IMR-90 (cell line): ENCODE measurements at regions of chr4 and their contacts with region 1.

Region 1: GRCh38 chr4:129641179-129641578 is 545.2 kb downstream of the C4orf33 start:
- DNase-seq: peak; percentile 22
- ATAC-seq: no peak
- H3K4me3 ChIP-seq: no peak overlapping the region
- H3K27ac ChIP-seq: no peak overlapping the region
- H3K4me1 ChIP-seq: no peaks in the 10 kb centered on the region
- H3K27me3 ChIP-seq: no peaks in the 10 kb centered on the region
- CTCF ChIP-seq: peak; percentile 62
- POLR2A ChIP-seq: no peak
- RAD21 ChIP-seq: peak; percentile 42

Region 2: DNA sequence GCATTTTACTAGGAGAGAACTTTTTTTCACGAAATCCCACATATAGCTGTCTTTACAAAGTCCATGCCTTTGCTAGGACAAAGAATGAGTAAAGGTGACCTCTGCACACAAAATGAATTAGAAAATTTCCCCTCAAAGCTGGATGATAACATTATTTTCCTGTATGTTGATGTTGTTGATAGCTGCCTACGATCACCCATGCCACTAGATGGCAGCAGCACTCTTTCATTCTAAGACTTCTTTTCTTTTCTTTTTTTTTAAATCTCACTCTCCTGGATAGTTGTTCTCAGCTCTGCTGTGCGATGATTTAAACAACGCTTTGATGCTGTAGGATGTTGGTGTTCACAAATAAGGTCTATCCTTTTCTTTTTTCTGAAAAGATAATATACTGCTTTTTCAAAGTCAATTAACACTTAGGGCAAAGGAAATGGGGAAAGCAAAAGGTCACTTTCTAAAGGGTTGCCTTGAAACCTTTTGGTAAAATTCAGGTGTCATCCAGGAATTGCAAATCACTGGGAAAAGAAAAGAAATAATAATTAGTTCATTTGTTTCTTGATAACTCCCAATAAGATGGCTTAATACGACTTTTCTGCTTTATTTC is 278.4 kb before region 1 on chr4:
- CTCF ChIA-PET with region 1: interaction called, 7 read pairs
- POLR2A ChIA-PET with region 1: no interaction called
- dilution Hi-C with region 1: no loop called
- in situ Hi-C with region 1: no loop called
- intact Hi-C with region 1: loop called (anchors 1 kb)
- DNase-seq: peak; percentile 60
- ATAC-seq: peak; percentile 67
- H3K4me3 ChIP-seq: no peak overlapping the region
- H3K27ac ChIP-seq: no peak overlapping the region
- H3K4me1 ChIP-seq: no peaks in the 10 kb centered on the region
- H3K27me3 ChIP-seq: peaks cover 8% of the 10 kb centered on the region
- CTCF ChIP-seq: peak; percentile 78
- POLR2A ChIP-seq: no peak
- RAD21 ChIP-seq: peak; percentile 74

Region 3: DNA sequence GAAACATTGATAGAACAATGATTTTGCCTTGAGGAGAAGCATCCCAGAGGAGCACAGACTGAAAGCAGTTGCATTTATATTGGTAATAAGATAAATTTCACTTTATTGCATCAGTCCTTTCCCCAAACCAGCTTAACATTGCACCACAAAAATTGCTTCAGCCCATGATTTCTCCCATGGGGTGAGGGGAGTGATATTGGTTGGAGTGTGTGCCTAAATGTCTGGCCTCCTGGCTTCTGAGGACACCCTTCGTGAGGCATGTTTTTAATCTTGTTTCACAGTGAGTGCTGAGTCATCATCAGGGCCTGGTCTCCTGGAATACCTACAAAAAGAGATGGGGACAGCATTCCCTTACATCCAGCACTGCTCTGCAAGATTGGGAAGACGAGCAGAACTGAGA is 57.3 kb before region 1 on chr4:
- CTCF ChIA-PET with region 1: no interaction called
- POLR2A ChIA-PET with region 1: no interaction called
- dilution Hi-C with region 1: no loop called
- in situ Hi-C with region 1: no loop called
- intact Hi-C with region 1: no loop called
- DNase-seq: no peak
- ATAC-seq: no peak
- H3K4me3 ChIP-seq: no peak overlapping the region
- H3K27ac ChIP-seq: no peak overlapping the region
- H3K4me1 ChIP-seq: no peaks in the 10 kb centered on the region
- H3K27me3 ChIP-seq: no peaks in the 10 kb centered on the region
- CTCF ChIP-seq: no peak
- POLR2A ChIP-seq: no peak
- RAD21 ChIP-seq: no peak

Region 4: DNA sequence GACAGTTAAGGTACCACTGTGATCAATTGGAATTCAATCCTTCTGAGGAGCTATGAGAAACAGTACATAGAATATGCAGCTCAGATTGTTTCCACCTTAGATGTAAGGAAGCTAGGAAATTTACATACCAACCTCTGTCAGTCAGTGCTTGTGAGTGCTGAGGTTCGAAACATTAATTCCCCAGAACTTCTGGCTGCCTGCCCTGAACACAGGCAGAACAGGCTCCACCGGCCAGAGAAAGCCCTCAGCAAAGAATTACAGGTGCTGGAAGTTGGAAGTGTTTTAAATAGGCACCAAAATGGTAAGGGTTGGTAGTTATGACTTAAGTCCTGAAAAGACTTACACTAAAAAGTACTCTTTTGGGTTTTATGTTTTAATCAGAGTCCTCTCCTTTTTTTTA is 106.6 kb after region 1 on chr4:
- CTCF ChIA-PET with region 1: no interaction called
- POLR2A ChIA-PET with region 1: no interaction called
- dilution Hi-C with region 1: no loop called
- in situ Hi-C with region 1: no loop called
- intact Hi-C with region 1: no loop called
- DNase-seq: no peak
- ATAC-seq: no peak
- H3K4me3 ChIP-seq: no peak overlapping the region
- H3K27ac ChIP-seq: no peak overlapping the region
- H3K4me1 ChIP-seq: no peaks in the 10 kb centered on the region
- H3K27me3 ChIP-seq: no peaks in the 10 kb centered on the region
- CTCF ChIP-seq: no peak
- POLR2A ChIP-seq: no peak
- RAD21 ChIP-seq: no peak